Activated B cell treated with CpG ODN at 0.5 μM for 24 hours (primary cell): ENCODE measurements at regions of chr1 and their contacts with region 1.

Region 1: GRCh38 chr1:66402194-66402593 is 131.8 kb upstream of the SGIP1 start:
- DNase-seq: peak; percentile 65
- ATAC-seq: peak; percentile 86
- H3K4me3 Mint-ChIP-seq: peak overlapping the region; percentile 72
- H3K27ac Mint-ChIP-seq: peak overlapping the region; percentile 90
- H3K4me1 Mint-ChIP-seq: peaks cover 67% of the 10 kb centered on the region
- H3K27me3 Mint-ChIP-seq: no peaks in the 10 kb centered on the region
- CTCF ChIP-seq: no peak

Region 2: DNA sequence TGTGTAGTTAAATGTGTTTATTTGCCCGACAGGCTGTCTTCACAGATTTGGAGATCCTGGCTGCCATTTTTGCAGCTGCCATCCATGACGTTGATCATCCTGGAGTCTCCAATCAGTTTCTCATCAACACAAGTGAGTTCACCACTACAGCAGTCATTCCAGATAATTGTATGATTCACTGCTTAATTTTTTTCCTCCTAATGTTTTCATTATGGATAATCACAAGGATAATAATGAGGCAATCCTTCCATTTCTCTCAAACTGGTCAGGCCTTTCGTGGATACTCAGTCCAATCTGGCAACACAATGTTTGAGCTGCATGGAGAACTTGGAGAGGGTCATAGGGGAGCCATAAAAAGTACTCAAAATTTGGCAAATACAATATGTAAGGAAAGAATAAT is 36.6 kb before region 1 on chr1:
- CTCF ChIA-PET with region 1: interaction called, 10 read pairs
- POLR2A ChIA-PET with region 1: interaction called, 21 read pairs
- intact Hi-C with region 1: no loop called
- DNase-seq: no peak
- ATAC-seq: no peak
- H3K4me3 Mint-ChIP-seq: no peak overlapping the region
- H3K27ac Mint-ChIP-seq: peak overlapping the region; percentile 75
- H3K4me1 Mint-ChIP-seq: peaks cover 81% of the 10 kb centered on the region
- H3K27me3 Mint-ChIP-seq: no peaks in the 10 kb centered on the region
- CTCF ChIP-seq: no peak

Region 3: GRCh38 chr1:66413136-66413837 is 11.1 kb after region 1 on chr1:
- CTCF ChIA-PET with region 1: interaction called, 4 read pairs
- POLR2A ChIA-PET with region 1: interaction called, 8 read pairs
- intact Hi-C with region 1: loop called (anchors 1 kb)
- DNase-seq: no peak
- ATAC-seq: no peak
- H3K4me3 Mint-ChIP-seq: no peak overlapping the region
- H3K27ac Mint-ChIP-seq: no peak overlapping the region
- H3K4me1 Mint-ChIP-seq: peaks cover 14% of the 10 kb centered on the region
- H3K27me3 Mint-ChIP-seq: no peaks in the 10 kb centered on the region
- CTCF ChIP-seq: no peak

Region 4: GRCh38 chr1:66436378-66437145 is 34.4 kb after region 1 on chr1:
- CTCF ChIA-PET with region 1: interaction called, 17 read pairs
- POLR2A ChIA-PET with region 1: interaction called, 16 read pairs
- intact Hi-C with region 1: loop called (anchors 1 kb)
- DNase-seq: no peak
- ATAC-seq: peak; percentile 65
- H3K4me3 Mint-ChIP-seq: no peak overlapping the region
- H3K27ac Mint-ChIP-seq: peak overlapping the region; percentile 63
- H3K4me1 Mint-ChIP-seq: peaks cover 38% of the 10 kb centered on the region
- H3K27me3 Mint-ChIP-seq: no peaks in the 10 kb centered on the region
- CTCF ChIP-seq: no peak

Region 5: GRCh38 chr1:66478116-66478515 is 75.9 kb after region 1 on chr1:
- CTCF ChIA-PET with region 1: no interaction called
- POLR2A ChIA-PET with region 1: no interaction called
- intact Hi-C with region 1: no loop called
- DNase-seq: no peak
- ATAC-seq: no peak
- H3K4me3 Mint-ChIP-seq: no peak overlapping the region
- H3K27ac Mint-ChIP-seq: no peak overlapping the region
- H3K4me1 Mint-ChIP-seq: no peaks in the 10 kb centered on the region
- H3K27me3 Mint-ChIP-seq: peaks cover 22% of the 10 kb centered on the region
- CTCF ChIP-seq: no peak